Activated naive CD4-positive, alpha-beta T cell treated with anti-CD3 and anti-CD28 coated beads, Interleukin-2, amount 10 ng/mL, durations not matched to agents 7 days and 5 days (primary cell): ENCODE measurements at regions of chr3 and their contacts with region 1.

Region 1: DNA sequence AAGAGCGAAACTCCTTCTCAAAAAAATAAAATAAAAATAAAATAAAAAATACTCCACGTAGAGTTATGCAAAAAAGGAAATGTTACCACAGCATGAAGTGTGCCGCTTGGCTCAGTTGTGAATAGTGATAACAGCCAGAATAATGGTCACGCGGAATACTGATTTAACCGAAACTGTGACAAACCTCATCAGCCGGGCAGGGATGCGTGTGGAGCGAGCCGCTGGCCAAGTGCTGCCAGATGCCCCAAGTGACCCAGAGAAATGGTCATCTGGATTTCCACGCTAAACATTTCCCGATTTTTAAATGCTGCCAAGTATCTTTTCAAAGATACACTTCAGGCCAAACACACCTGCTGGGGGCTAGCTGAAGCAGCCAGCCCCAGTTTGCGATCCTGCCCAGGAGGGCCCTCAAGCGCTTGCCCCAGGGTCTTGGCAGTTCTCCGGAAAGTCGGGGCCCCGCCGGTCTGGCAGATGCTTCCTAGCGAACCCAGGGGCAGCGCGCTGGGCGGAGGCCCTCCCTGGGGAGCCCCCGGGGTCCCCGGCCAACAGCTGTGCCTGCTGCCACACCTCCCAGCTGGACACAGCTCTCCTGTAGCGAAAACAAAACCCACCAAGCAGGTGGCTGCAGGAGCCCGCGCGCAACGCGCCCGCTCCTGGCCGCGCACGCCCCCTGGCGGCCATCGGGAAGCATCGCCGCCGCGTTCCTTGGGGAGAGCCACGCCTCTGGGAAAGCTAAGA is 35.1 kb downstream of the CMTM6 start:
- DNase-seq: peak; percentile 73
- H3K4me3 Mint-ChIP-seq: peak overlapping the region; percentile 27
- H3K27ac Mint-ChIP-seq: no peak overlapping the region
- H3K4me1 Mint-ChIP-seq: peaks cover 59% of the 10 kb centered on the region
- H3K27me3 Mint-ChIP-seq: no peaks in the 10 kb centered on the region

Region 2: DNA sequence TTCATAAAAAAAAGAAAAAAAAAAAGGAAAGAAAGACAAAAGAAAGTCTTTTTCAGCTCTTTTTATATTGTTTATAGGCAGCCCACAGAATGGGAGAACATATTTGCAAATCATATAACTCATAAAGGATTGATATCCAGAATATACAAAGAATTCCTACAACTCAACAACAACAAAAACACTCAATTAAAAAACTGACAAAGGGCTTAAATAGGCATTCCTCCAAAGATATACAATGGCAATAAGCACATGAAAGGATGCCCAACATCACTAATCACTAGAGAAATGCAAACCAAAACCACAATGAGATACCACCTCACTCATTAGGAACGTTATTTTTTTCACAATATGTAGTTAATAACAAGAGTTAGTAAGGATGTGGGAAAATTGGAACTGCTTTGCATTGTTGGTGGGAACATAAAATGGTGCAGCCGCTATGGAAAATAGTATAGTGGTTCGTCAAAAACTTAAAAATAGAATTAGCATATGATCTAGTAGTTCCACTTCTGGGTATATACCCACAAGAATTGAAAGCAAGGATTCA is 283.2 kb before region 1 on chr3:
- CTCF ChIA-PET with region 1: no interaction called
- DNase-seq: no peak
- H3K4me3 Mint-ChIP-seq: no peak overlapping the region
- H3K27ac Mint-ChIP-seq: no peak overlapping the region
- H3K4me1 Mint-ChIP-seq: no peaks in the 10 kb centered on the region
- H3K27me3 Mint-ChIP-seq: peaks cover 22% of the 10 kb centered on the region

Region 3: DNA sequence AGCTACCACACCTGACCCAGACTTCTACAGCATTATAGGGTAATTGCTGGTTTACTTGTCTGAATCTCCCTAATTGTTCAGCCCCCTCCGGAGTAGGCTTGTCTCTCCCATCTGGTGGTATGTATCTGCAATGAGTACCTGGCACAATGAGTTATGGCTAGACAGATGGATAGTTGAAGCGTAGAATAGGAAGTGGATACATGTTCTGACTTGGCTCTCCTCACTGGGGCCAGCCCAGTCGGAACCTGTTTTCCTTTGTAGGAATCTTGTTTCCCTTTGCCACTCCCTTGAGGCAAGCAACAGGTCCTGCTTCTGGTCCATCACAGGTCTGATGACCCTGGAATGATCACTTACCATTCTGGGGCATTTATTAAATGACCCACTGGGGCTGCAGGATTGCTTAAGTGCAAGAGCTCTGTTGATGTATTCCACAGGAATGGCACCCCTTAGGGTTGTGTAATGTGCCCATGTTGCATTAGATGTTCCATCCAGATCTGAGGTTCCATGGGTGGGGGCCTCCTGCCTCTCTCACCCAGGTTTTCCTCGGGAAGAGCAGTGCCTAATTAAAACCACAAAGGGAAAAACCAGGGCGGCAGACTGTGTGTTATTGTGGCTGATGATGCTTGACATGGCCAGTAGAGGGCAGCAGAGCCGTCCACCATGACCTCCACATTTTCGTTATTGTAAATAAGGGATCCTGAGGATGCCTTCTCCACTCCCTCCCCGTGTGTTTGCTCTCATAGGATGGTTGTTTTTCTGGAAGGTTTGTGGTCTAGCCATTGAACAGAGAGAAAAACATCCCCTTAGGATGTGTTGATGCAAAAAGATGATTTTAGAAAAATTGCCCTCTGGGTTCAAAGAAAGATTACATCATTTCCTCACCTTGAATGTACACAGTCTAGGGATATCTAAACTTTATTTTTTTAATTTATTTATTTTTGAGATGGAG is 171.0 kb before region 1 on chr3:
- CTCF ChIA-PET with region 1: interaction called, 29 read pairs
- DNase-seq: peak; percentile 73
- H3K4me3 Mint-ChIP-seq: no peak overlapping the region
- H3K27ac Mint-ChIP-seq: peak overlapping the region; percentile 91
- H3K4me1 Mint-ChIP-seq: peaks cover 43% of the 10 kb centered on the region
- H3K27me3 Mint-ChIP-seq: no peaks in the 10 kb centered on the region

Region 4: DNA sequence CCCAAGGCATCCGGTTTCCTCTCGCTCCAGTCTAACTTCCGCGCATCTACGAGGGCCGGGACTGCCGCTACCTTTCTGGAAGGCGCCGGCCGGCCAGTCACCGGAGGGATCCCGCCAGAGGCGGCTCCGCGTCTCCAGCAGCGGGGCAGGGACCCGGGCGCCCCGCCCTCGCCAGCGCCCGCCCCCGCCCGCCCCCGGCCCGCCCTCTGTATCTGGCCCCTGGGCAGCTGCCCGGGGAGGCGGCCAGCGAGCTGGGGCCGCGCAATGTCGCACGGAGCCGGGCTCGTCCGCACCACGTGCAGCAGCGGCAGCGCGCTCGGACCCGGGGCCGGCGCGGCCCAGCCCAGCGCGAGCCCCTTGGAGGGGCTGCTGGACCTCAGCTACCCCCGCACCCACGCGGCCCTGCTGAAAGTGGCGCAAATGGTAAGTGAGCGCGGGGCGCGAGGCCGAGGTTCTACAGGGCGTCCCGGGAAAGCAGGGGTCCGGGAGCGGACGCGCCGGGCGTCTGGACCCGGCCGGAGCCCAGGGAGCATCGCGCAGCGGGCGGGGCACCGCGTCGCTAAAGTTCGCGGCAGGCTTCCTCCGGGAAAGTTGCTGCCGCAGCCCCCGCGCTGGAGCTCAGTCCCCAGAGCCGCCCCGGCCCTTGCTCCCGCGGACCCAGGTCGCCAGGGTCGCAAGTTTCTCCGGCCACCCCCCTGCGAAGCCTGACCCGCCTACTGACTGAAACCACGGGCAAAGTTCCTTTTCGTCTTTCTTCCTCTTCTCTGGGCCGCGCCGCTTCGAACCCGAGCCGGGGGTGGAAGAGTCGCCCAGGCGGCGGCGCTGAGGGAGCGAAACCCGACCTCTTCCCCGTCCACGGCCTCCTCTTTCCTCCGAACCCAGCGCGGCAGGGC is 75.6 kb before region 1 on chr3 and contains the start of gene CMTM7:
- CTCF ChIA-PET with region 1: interaction called, 18 read pairs
- DNase-seq: peak; percentile 80
- H3K4me3 Mint-ChIP-seq: peak within 1 kb of the TSS; percentile 86
- H3K27ac Mint-ChIP-seq: peak within 1 kb of the TSS; percentile 89
- H3K4me1 Mint-ChIP-seq: peaks cover 57% of the 10 kb centered on the region
- H3K27me3 Mint-ChIP-seq: no peaks in the 10 kb centered on the region

Region 5: GRCh38 chr3:32414520-32415202 is 52.8 kb before region 1 on chr3:
- CTCF ChIA-PET with region 1: interaction called, 13 read pairs
- DNase-seq: peak; percentile 73
- H3K4me3 Mint-ChIP-seq: peak overlapping the region; percentile 20
- H3K27ac Mint-ChIP-seq: peak overlapping the region; percentile 93
- H3K4me1 Mint-ChIP-seq: peaks cover 75% of the 10 kb centered on the region
- H3K27me3 Mint-ChIP-seq: no peaks in the 10 kb centered on the region

Region 6: GRCh38 chr3:32432711-32433530 is 34.6 kb before region 1 on chr3:
- CTCF ChIA-PET with region 1: interaction called, 12 read pairs
- DNase-seq: peak; percentile 48
- H3K4me3 Mint-ChIP-seq: peak overlapping the region; percentile 56
- H3K27ac Mint-ChIP-seq: peak overlapping the region; percentile 94
- H3K4me1 Mint-ChIP-seq: peaks cover 90% of the 10 kb centered on the region
- H3K27me3 Mint-ChIP-seq: no peaks in the 10 kb centered on the region

Region 7: DNA sequence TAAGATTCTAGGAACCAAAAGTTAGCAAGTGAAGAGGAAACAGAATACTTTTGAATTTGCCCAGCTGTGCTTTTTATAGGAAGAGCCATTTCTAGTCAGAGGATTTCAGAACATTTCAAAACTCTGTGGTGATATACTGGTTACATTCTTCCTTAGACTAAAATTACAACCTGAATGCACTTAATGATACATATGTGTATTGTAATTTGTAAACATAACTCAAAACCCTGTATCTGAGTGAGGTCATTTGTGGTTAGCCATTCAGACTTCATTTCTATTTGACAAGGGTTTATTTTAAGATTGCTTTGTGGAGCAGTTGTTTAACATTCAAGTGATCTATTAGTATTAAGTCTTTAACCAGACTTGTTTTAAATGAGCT is 290.9 kb after region 1 on chr3:
- CTCF ChIA-PET with region 1: no interaction called
- DNase-seq: no peak
- H3K4me3 Mint-ChIP-seq: no peak overlapping the region
- H3K27ac Mint-ChIP-seq: peak overlapping the region; percentile 0
- H3K4me1 Mint-ChIP-seq: peaks cover 15% of the 10 kb centered on the region
- H3K27me3 Mint-ChIP-seq: no peaks in the 10 kb centered on the region

Region 8: GRCh38 chr3:33047842-33048834 is 580.6 kb after region 1 on chr3:
- CTCF ChIA-PET with region 1: no interaction called
- DNase-seq: peak; percentile 74
- H3K4me3 Mint-ChIP-seq: peak overlapping the region; percentile 63
- H3K27ac Mint-ChIP-seq: peak overlapping the region; percentile 95
- H3K4me1 Mint-ChIP-seq: peaks cover 94% of the 10 kb centered on the region
- H3K27me3 Mint-ChIP-seq: no peaks in the 10 kb centered on the region